ENCODE measurements at regions of chr9 and their contacts with region 1.

Region 1: DNA sequence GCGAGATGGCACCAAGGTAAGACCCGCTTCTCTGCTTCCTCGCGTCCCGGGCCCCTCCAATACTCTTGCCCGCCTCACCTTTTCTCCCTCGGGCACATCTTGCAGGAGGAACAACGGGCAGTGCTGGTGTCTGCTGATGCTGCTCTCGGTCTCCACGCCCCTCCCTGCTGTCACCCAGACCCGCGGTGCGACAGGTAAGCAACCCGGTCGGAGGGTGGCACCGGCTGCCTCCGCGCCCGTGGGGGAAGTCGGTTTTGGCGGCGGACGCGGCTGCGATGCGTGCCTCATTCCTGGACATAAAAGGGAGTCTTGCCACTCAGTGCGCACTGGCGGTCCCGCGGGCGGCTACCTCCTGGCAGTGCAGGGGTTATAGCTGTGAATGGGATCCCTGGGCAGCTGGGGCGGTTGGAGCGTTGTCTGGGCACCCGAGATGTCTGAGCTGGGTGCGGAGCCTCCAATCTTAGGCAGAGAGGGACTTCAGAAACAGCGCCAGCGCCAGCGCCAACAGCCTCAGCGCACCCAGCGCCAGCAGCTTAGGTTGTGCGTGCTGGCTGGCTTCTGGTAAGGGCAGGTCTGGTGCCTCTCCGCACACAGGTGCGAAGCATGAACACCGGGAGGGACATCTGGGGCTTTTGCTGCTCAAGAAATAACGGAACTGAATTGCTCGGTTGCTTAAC is 488 bp downstream of the COL15A1 start:
- DNase-seq: peak; percentile 57
- ATAC-seq: peak; percentile 61

Region 2: DNA sequence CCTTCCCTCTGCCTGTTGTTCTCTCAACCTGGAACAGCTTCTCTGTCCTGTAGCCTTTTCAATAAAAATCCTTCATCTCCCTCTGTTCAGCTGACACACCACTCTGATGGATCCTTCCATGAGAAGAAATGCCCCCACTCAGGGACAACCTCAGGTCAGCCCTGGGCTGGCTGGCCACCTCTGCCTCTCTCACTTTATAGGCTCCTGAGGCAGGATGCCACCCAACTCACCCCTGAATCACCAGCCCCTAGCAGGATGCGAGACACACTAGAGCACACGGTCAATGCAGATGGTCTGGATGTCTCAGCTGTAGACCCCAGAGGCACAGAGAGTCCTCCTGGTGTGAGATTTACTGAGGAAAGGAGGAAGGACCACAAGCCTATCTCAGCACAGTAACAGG is 329.3 kb before region 1 on chr9:
- intact Hi-C with region 1: no loop called
- DNase-seq: no peak
- ATAC-seq: no peak

Region 3: GRCh38 chr9:98887918-98888510 is 56.2 kb before region 1 on chr9:
- intact Hi-C with region 1: loop called (anchors 10 kb)
- DNase-seq: no peak
- ATAC-seq: no peak

Measured in left ventricle myocardium superior (tissue), 1 donor.